Calu3 (cell line): ENCODE measurements at regions of chr3 and their contacts with region 1.

Region 1: DNA sequence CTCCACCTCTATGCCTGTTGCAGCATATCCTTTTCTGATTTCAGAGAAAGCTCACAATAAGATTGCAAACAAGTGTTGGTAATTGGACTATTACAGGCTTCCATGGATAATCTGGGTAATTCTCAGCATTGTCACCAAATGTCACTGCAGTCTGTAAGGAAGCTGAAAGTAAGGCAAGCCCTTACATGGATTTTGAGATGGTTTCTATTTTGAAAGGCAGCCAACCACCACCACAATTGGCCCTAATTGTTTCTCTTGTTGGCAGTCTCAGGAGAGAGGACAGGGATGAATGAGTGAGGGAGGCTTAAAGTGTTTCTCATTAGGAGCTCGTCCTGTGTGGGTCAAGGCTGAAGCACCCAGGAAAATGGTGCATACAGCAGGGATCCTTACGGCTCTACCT is 879.9 kb downstream of the TUSC7 start:
- DNase-seq: no peak
- H3K4me3 Mint-ChIP-seq: no peak overlapping the region
- H3K27ac Mint-ChIP-seq: no peak overlapping the region
- H3K4me1 Mint-ChIP-seq: no peaks in the 10 kb centered on the region
- H3K27me3 Mint-ChIP-seq: no peaks in the 10 kb centered on the region
- CTCF ChIP-seq: no peak

Region 2: DNA sequence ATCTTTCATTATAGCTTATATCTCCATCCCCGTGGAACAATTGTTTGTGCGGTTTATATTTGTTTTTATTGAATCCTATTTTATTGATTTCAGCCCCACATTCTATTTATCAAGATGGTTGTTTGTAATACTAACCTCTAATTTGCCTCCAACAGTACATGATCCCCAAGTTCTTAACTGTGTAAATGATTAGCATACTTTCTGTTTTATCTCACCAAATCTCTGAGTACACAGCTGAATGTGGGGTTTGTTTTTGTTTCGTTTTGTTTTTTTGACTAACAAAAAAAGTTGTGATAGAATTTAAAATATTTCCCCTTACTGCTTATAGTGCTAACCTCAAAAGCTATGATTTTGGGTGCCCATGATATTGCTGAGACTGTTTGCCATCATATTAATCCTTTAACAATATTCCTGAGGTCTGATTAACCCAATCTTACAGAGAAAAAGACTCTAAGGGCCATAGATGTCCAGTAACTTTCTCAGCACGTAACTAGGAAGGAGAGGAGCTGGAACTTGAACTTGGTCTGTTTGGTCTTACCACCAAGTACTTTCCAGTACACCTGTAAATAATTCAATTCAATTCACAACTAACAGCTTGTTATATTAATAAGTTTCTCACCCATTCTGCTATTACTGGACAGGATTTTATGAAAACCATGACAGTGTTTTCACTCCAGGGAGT is 90.1 kb before region 1 on chr3:
- CTCF ChIA-PET with region 1: no interaction called
- intact Hi-C with region 1: no loop called
- DNase-seq: no peak
- H3K4me3 Mint-ChIP-seq: no peak overlapping the region
- H3K27ac Mint-ChIP-seq: no peak overlapping the region
- H3K4me1 Mint-ChIP-seq: peaks cover 12% of the 10 kb centered on the region
- H3K27me3 Mint-ChIP-seq: no peaks in the 10 kb centered on the region
- CTCF ChIP-seq: no peak

Region 3: GRCh38 chr3:117572786-117573185 is 16.7 kb before region 1 on chr3:
- CTCF ChIA-PET with region 1: no interaction called
- intact Hi-C with region 1: loop called (anchors 2 kb)
- DNase-seq: no peak
- H3K4me3 Mint-ChIP-seq: no peak overlapping the region
- H3K27ac Mint-ChIP-seq: no peak overlapping the region
- H3K4me1 Mint-ChIP-seq: no peaks in the 10 kb centered on the region
- H3K27me3 Mint-ChIP-seq: no peaks in the 10 kb centered on the region
- CTCF ChIP-seq: no peak

Region 4: GRCh38 chr3:117665296-117665695 is 75.8 kb after region 1 on chr3:
- CTCF ChIA-PET with region 1: no interaction called
- intact Hi-C with region 1: no loop called
- DNase-seq: peak; percentile 19
- H3K4me3 Mint-ChIP-seq: no peak overlapping the region
- H3K27ac Mint-ChIP-seq: no peak overlapping the region
- H3K4me1 Mint-ChIP-seq: peaks cover 10% of the 10 kb centered on the region
- H3K27me3 Mint-ChIP-seq: peaks cover 7% of the 10 kb centered on the region
- CTCF ChIP-seq: no peak

Region 5: DNA sequence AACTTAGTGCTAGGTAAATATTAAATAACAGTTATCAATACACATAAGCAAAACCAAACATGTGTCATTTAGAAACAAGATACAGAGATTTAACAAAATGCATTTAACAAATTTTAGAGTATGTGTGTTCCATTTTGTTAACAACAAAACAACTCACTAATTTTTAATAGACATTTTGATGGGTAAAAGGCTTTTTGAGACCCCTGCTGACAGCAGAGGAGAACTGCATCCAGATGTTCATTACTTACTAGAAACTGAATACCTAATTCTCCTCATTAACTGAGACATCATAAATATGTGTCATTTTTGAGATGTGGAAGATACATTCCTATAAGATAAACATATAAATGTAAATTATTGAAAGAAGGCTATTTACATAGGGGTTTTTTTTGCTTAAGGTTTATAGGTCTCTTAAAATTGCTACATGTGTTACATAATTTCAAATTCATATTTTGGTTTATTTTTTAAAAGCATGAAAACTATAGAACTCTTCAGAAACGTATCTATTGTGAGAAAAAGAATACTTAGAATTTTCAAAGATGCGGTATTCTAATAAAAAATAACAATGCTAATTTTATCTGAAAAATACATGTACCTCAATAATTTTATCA is 130.0 kb after region 1 on chr3:
- CTCF ChIA-PET with region 1: no interaction called
- intact Hi-C with region 1: no loop called
- DNase-seq: peak; percentile 18
- H3K4me3 Mint-ChIP-seq: no peak overlapping the region
- H3K27ac Mint-ChIP-seq: no peak overlapping the region
- H3K4me1 Mint-ChIP-seq: no peaks in the 10 kb centered on the region
- H3K27me3 Mint-ChIP-seq: no peaks in the 10 kb centered on the region
- CTCF ChIP-seq: peak; percentile 37